Esophagus squamous epithelium (tissue), 5 donors: ENCODE measurements at regions of chr3 and their contacts with region 1.

Region 1: GRCh38 chr3:184371570-184372018 is 6.4 kb downstream of the THPO start:
- DNase-seq: peak; percentile 6
- H3K4me3 ChIP-seq: no peak overlapping the region
- H3K27ac ChIP-seq: no peak overlapping the region
- H3K4me1 ChIP-seq: peaks cover 0 to 20% (median 6%) of the 10 kb centered on the region in 3 donors
- H3K27me3 ChIP-seq: peaks cover 0 to 31% (median 0%) of the 10 kb centered on the region in 4 donors
- CTCF ChIP-seq: peak; percentile 66 to 96 (median 92)
- POLR2A ChIP-seq: no peak

Region 2: GRCh38 chr3:183745300-183746098 is 626.1 kb before region 1 on chr3:
- intact Hi-C with region 1: no loop called
- DNase-seq: no peak
- H3K4me3 ChIP-seq: no peak overlapping the region
- H3K27ac ChIP-seq: no peak overlapping the region
- H3K4me1 ChIP-seq: no peaks in the 10 kb centered on the region
- H3K27me3 ChIP-seq: no peaks in the 10 kb centered on the region
- CTCF ChIP-seq: no peak
- POLR2A ChIP-seq: no peak

Region 3: GRCh38 chr3:184543843-184544512 is 172.4 kb after region 1 on chr3:
- intact Hi-C with region 1: loop called (anchors 10 kb)
- DNase-seq: peak; percentile 18
- H3K4me3 ChIP-seq: peak overlapping the region in 1 of 4 donors; percentile 15
- H3K27ac ChIP-seq: no peak overlapping the region
- H3K4me1 ChIP-seq: peaks cover 0 to 8% (median 7%) of the 10 kb centered on the region in 3 donors
- H3K27me3 ChIP-seq: peaks cover 0 to 49% (median 0%) of the 10 kb centered on the region in 4 donors
- CTCF ChIP-seq: peak; percentile 80 to 95 (median 92)
- POLR2A ChIP-seq: no peak